AG04450 (cell line): ENCODE measurements at regions of chr9 and their contacts with region 1.

Region 1: DNA sequence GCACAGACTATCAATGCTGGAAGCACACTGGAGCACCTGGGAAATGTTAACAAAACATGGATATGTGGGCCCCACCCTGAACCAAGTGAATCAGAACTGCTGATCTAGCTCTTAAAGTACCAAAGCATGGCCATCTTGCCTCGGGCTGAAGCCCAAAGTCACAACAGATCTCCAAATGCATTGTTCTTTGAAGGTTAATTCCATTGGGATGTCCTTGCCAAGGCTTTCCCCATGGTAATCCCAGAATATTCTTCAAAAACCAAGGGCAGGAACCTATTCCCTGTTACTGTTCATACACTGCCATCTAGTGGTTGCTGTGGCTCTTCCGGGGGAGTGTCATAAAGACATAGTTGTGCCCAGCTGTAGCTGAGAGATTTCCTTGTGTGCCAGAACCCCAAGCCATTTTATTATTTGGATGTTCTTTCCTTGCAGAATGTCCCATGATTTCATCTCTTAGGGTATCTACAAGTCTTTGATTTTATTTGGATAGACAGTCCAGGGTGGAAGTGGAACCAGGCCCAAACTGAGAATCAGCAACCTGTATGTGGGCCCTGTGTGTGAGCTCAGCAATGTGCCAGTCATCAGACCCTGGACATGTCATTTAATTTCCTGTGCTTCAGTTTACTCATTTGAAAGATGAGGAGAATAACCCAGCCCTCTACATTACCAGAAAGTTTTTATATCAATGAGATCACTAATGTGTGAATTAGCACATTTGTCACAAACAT is 290.0 kb downstream of the ACTL7B start:
- DNase-seq: peak; percentile 81
- H3K4me3 ChIP-seq: no peak overlapping the region
- H3K27ac ChIP-seq: no peak overlapping the region
- H3K27me3 ChIP-seq: no peaks in the 10 kb centered on the region
- CTCF ChIP-seq: peak; percentile 94

Region 2: DNA sequence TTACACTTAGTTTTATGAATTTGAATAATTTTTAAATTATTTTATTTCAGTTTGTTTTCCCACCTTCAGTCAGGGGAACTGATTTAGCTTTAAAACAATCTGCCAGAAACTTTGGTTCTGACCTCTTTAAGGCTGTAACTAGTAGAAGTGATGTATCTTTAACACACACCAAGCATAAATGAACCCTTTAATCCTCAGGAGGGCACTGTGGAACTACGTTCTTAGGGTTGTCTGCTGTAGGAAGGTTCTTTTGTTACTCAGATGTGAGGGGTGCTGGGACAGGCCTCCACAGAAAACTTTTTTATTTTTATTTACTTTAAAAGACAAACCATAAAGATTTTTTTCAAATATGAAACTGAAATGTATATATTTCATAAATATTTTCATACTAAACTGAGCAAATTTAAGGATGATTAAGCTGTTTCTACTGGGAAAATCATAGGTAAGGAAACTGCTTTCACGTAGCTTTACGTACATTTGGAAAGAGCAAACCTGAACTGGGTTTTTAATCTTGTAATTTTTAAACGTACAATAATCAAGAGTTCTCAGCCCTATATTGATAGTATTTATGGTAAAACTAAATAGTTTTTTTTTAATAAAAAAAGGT is 1081.6 kb before region 1 on chr9:
- CTCF ChIA-PET with region 1: interaction called, 57 read pairs
- POLR2A ChIA-PET with region 1: no interaction called
- DNase-seq: peak; percentile 59
- H3K4me3 ChIP-seq: no peak overlapping the region
- H3K27ac ChIP-seq: no peak overlapping the region
- H3K27me3 ChIP-seq: peaks cover 11% of the 10 kb centered on the region
- CTCF ChIP-seq: peak; percentile 69

Region 3: GRCh38 chr9:108150736-108151586 is 414.9 kb before region 1 on chr9:
- CTCF ChIA-PET with region 1: no interaction called
- POLR2A ChIA-PET with region 1: no interaction called
- DNase-seq: peak; percentile 11
- H3K4me3 ChIP-seq: no peak overlapping the region
- H3K27ac ChIP-seq: no peak overlapping the region
- H3K27me3 ChIP-seq: no peaks in the 10 kb centered on the region
- CTCF ChIP-seq: no peak

Region 4: DNA sequence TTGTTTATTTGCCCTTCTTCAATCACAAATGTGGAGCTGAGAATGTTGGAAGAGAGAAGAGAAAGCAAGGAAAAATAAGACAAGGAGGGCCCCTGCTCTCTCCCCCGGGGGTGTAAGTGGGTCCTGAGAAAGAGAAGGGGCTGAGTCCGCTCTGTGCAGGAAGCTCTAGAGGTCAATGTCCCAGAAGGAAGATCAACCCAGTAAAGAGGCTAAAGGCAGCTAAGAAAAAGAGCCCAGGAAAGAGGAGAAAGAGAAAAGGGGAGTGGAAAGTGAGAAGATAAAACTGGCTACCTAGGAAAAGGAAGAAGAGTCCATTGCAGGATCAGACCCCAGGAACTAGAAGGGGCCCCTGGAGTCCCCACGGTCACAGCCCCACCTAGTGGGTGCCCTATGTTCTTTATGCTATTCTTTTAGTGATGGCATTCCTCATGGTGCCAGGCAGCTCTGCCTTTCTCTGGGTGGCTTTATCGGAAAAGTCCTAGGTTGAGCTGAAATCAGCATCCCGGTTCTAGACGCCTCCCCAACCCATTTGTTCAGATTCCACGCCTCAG is 293.4 kb before region 1 on chr9:
- CTCF ChIA-PET with region 1: interaction called, 11 read pairs
- POLR2A ChIA-PET with region 1: no interaction called
- DNase-seq: peak; percentile 7
- H3K4me3 ChIP-seq: peak overlapping the region; percentile 49
- H3K27ac ChIP-seq: peak overlapping the region; percentile 35
- H3K27me3 ChIP-seq: no peaks in the 10 kb centered on the region
- CTCF ChIP-seq: peak; percentile 60

Region 5: DNA sequence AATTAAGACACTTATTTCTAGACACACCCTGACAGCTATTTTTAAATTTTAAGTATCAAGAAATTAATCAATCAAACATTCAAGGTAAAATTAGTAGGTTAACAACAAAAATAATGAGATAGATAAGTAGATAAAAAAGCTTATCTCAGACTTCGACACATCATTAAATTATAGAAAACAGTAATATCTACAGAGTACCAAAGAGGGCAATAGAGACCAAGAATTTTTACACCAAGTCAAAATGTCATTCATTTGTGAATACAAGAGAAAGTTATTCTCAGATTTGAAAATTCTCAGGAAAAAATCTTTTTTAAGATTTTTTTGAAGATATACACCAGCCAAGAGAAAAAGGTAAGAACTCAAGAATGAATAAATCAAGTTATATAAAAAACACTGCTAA is 155.7 kb before region 1 on chr9:
- CTCF ChIA-PET with region 1: interaction called, 19 read pairs
- POLR2A ChIA-PET with region 1: no interaction called
- DNase-seq: no peak
- H3K4me3 ChIP-seq: no peak overlapping the region
- H3K27ac ChIP-seq: no peak overlapping the region
- H3K27me3 ChIP-seq: no peaks in the 10 kb centered on the region
- CTCF ChIP-seq: no peak

Region 6: GRCh38 chr9:108416321-108416720 is 149.5 kb before region 1 on chr9:
- CTCF ChIA-PET with region 1: interaction called, 18 read pairs
- POLR2A ChIA-PET with region 1: no interaction called
- DNase-seq: no peak
- H3K4me3 ChIP-seq: no peak overlapping the region
- H3K27ac ChIP-seq: no peak overlapping the region
- H3K27me3 ChIP-seq: no peaks in the 10 kb centered on the region
- CTCF ChIP-seq: no peak

Region 7: DNA sequence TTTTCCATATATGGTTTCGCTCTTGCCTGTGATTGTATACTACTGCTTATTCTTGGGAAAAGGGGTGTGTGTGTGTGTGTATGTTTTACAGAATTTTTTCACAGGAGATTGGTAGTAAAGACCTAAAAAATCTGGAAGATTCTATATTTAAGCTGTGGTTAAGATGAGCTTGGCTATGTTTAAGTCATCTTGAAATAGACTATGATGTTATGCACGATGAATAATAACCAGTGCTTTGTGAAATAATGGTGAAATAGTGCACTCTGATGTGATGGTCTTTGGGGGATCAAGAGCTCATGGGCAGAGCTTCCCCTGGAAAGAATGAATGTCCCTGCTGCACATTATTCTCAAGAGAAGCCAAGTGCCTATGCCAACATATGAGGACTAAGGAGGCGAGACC is 11.0 kb before region 1 on chr9:
- CTCF ChIA-PET with region 1: interaction called, 12 read pairs
- POLR2A ChIA-PET with region 1: no interaction called
- DNase-seq: no peak
- H3K4me3 ChIP-seq: no peak overlapping the region
- H3K27ac ChIP-seq: no peak overlapping the region
- H3K27me3 ChIP-seq: no peaks in the 10 kb centered on the region
- CTCF ChIP-seq: no peak